A673 (cell line): ENCODE measurements at regions of chr2 and their contacts with region 1.

Region 1: GRCh38 chr2:714005-714741 is 37.0 kb upstream of the TMEM18 start:
- DNase-seq: peak; percentile 75
- H3K4me3 ChIP-seq: no peak overlapping the region
- H3K27ac ChIP-seq: no peak overlapping the region
- H3K4me1 ChIP-seq: no peaks in the 10 kb centered on the region
- H3K27me3 ChIP-seq: no peaks in the 10 kb centered on the region
- CTCF ChIP-seq: peak; percentile 86

Region 2: GRCh38 chr2:667332-667999 is 46.7 kb before region 1 on chr2:
- CTCF ChIA-PET with region 1: interaction called, 11 read pairs
- POLR2A ChIA-PET with region 1: no interaction called
- intact Hi-C with region 1: no loop called
- DNase-seq: peak; percentile 61
- H3K4me3 ChIP-seq: no peak overlapping the region
- H3K27ac ChIP-seq: no peak overlapping the region
- H3K4me1 ChIP-seq: no peaks in the 10 kb centered on the region
- H3K27me3 ChIP-seq: no peaks in the 10 kb centered on the region
- CTCF ChIP-seq: peak; percentile 52

Region 3: GRCh38 chr2:692767-693166 is 21.4 kb before region 1 on chr2:
- CTCF ChIA-PET with region 1: no interaction called
- POLR2A ChIA-PET with region 1: no interaction called
- intact Hi-C with region 1: no loop called
- DNase-seq: no peak
- H3K4me3 ChIP-seq: no peak overlapping the region
- H3K27ac ChIP-seq: no peak overlapping the region
- H3K4me1 ChIP-seq: no peaks in the 10 kb centered on the region
- H3K27me3 ChIP-seq: no peaks in the 10 kb centered on the region
- CTCF ChIP-seq: no peak

Region 4: GRCh38 chr2:898319-898718 is 184.1 kb after region 1 on chr2:
- CTCF ChIA-PET with region 1: no interaction called
- POLR2A ChIA-PET with region 1: no interaction called
- intact Hi-C with region 1: loop called (anchors 5 kb)
- DNase-seq: peak; percentile 36
- H3K4me3 ChIP-seq: no peak overlapping the region
- H3K27ac ChIP-seq: no peak overlapping the region
- H3K4me1 ChIP-seq: no peaks in the 10 kb centered on the region
- H3K27me3 ChIP-seq: no peaks in the 10 kb centered on the region
- CTCF ChIP-seq: peak; percentile 61

Region 5: DNA sequence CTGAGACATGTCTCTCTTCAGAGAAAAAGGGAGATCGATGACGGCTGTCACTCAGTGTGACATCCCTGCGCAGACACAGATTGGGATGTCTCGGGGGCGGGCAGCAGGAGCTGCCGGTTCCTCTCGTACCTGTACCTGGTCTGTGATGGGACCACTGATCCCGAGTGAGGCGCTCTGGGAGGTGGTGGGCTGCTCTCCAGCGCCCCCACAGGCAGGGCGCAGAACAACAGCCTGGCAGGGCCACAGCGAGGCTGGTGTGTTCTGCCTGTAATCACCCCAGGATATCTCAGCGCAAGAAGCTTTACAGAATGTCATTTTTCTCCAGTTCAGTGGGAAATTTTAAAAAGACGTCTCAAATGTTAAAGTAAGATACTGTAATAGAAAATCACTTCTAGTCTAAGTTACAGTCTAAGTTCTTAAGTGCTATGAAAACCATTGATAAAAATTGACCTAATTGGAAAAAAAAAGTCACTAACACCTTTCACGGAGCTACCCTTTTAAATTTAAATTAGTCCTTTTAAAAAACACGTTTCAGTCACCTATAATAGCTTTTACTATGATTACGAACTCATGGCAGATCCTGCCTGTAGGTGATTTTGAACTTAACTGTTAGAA is 426.3 kb after region 1 on chr2:
- CTCF ChIA-PET with region 1: interaction called, 8 read pairs
- POLR2A ChIA-PET with region 1: no interaction called
- intact Hi-C with region 1: loop called (anchors 5 kb)
- DNase-seq: peak; percentile 26
- H3K4me3 ChIP-seq: no peak overlapping the region
- H3K27ac ChIP-seq: no peak overlapping the region
- H3K4me1 ChIP-seq: no peaks in the 10 kb centered on the region
- H3K27me3 ChIP-seq: no peaks in the 10 kb centered on the region
- CTCF ChIP-seq: peak; percentile 91